Natural killer cell (primary cell): ENCODE measurements at regions of chr15 and their contacts with region 1.

Region 1: GRCh38 chr15:72599855-72600464 is 54.5 kb upstream of the GOLGA6B start:
- DNase-seq: peak in 1 of 2 donors; percentile 61
- ATAC-seq: peak in 1 of 3 donors; percentile 40
- H3K4me3 ChIP-seq: no peak overlapping the region
- H3K4me3 Mint-ChIP-seq: no peak overlapping the region
- H3K27ac ChIP-seq: no peak overlapping the region
- H3K27ac Mint-ChIP-seq: no peak overlapping the region
- H3K4me1 ChIP-seq: no peaks in the 10 kb centered on the region
- H3K4me1 Mint-ChIP-seq: no peaks in the 10 kb centered on the region
- H3K27me3 ChIP-seq: no peaks in the 10 kb centered on the region
- H3K27me3 Mint-ChIP-seq: no peaks in the 10 kb centered on the region
- CTCF ChIP-seq: peak; percentile 66

Region 2: GRCh38 chr15:72482275-72482674 is 117.7 kb before region 1 on chr15:
- intact Hi-C with region 1: no loop called
- DNase-seq: no peak
- ATAC-seq: no peak
- H3K4me3 ChIP-seq: no peak overlapping the region
- H3K4me3 Mint-ChIP-seq: no peak overlapping the region
- H3K27ac ChIP-seq: no peak overlapping the region
- H3K27ac Mint-ChIP-seq: peak overlapping the region in 1 of 2 donors; percentile 51
- H3K4me1 ChIP-seq: peaks cover 16% of the 10 kb centered on the region
- H3K4me1 Mint-ChIP-seq: peaks cover 62% of the 10 kb centered on the region in 2 donors
- H3K27me3 ChIP-seq: no peaks in the 10 kb centered on the region
- H3K27me3 Mint-ChIP-seq: no peaks in the 10 kb centered on the region
- CTCF ChIP-seq: no peak

Region 3: DNA sequence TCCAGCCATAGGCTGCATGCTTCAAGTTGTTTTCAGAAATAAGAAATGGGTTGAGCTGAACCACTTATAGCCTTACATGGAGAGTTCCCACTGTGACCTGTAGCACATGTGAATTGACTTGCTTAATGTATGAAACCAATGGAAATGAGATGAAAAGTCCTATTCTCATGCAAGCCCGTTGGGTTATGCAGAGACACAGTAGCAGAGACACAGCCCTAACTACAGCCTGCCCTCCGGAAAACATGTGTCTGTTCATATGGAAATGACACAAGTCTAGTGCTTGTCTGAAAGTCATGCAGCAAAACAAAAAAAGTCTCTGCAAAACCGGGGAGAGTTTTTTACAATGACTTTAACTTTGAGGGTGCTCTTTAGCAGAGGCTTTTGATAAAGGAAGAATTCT is 71.6 kb after region 1 on chr15:
- intact Hi-C with region 1: loop called (anchors 10 kb)
- DNase-seq: no peak
- ATAC-seq: no peak
- H3K4me3 ChIP-seq: no peak overlapping the region
- H3K4me3 Mint-ChIP-seq: no peak overlapping the region
- H3K27ac ChIP-seq: no peak overlapping the region
- H3K27ac Mint-ChIP-seq: no peak overlapping the region
- H3K4me1 ChIP-seq: peaks cover 6% of the 10 kb centered on the region
- H3K4me1 Mint-ChIP-seq: peaks cover 6 to 7% of the 10 kb centered on the region in 2 donors
- H3K27me3 ChIP-seq: peaks cover 2% of the 10 kb centered on the region
- H3K27me3 Mint-ChIP-seq: peaks cover 10 to 16% of the 10 kb centered on the region in 2 donors
- CTCF ChIP-seq: no peak

Region 4: GRCh38 chr15:73081321-73081958 is 481.5 kb after region 1 on chr15:
- intact Hi-C with region 1: loop called (anchors 5 kb)
- DNase-seq: peak in 1 of 2 donors; percentile 73
- ATAC-seq: peak; percentile 54 to 65 (median 60)
- H3K4me3 ChIP-seq: no peak overlapping the region
- H3K4me3 Mint-ChIP-seq: no peak overlapping the region
- H3K27ac ChIP-seq: no peak overlapping the region
- H3K27ac Mint-ChIP-seq: no peak overlapping the region
- H3K4me1 ChIP-seq: no peaks in the 10 kb centered on the region
- H3K4me1 Mint-ChIP-seq: no peaks in the 10 kb centered on the region
- H3K27me3 ChIP-seq: peaks cover 3% of the 10 kb centered on the region
- H3K27me3 Mint-ChIP-seq: peaks cover 6 to 7% of the 10 kb centered on the region in 2 donors
- CTCF ChIP-seq: peak; percentile 79